ENCODE measurements at regions of chr16 and their contacts with region 1.

Region 1: DNA sequence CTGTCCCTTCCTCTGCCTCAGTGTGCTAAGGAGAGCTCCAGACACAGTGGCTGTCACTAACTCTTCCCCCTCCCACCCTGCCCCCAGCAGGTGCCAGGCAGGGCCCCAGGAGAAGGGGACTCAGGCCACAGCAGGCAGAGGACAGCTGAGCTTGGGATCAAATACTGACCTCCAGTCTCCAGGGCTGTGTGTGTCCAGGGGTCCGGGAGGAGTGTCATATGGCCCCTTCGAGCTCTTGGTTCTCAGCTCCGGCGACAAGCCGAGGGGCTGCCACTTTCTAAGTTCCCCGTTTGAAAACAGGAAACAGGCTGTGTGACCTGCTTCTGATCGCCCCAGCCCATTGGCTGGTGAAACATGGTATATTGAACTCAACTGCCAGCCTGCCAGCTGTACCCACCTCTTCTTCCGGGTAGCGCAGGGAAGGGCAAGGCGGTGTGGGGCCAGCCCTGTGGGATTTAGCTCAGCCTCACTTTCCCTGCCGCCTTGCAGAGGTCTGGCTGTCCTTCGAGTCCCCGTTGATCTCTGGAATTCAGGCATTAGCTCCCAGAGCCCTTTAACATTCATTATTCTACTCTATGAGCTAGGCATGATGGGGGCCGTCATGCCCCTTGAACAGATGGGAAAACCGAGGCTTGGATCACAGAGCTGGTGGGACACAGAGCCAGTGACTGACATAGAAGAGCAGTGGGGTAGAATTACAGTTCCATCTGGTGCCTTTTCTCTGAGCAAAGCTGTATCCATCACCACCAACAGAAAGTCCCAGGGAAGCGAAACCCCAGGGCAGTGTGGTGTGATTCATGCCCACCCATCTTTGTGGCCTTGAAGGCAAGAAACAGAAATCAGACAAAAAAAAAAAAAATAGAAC is at the start of gene SNX20:
- DNase-seq: peak in 8 of 9 donors; percentile 40 to 80 (median 75)
- ATAC-seq: peak; percentile 77
- H3K4me3 ChIP-seq: peak within 1 kb of the TSS; percentile 85
- H3K4me3 Mint-ChIP-seq: peak within 1 kb of the TSS; percentile 83 to 98 (median 93)
- H3K27ac ChIP-seq: peak within 1 kb of the TSS; percentile 90
- H3K27ac Mint-ChIP-seq: peak within 1 kb of the TSS; percentile 89 to 99 (median 97)
- H3K4me1 ChIP-seq: peaks cover 80 to 81% of the 10 kb centered on the region in 2 donors
- H3K4me1 Mint-ChIP-seq: peaks cover 68 to 94% (median 89%) of the 10 kb centered on the region in 7 donors
- H3K27me3 ChIP-seq: no peaks in the 10 kb centered on the region
- H3K27me3 Mint-ChIP-seq: no peaks in the 10 kb centered on the region
- total RNA-seq, gene SNX20: 32.4 to 94.9 (median 70.8) TPM

Region 2: DNA sequence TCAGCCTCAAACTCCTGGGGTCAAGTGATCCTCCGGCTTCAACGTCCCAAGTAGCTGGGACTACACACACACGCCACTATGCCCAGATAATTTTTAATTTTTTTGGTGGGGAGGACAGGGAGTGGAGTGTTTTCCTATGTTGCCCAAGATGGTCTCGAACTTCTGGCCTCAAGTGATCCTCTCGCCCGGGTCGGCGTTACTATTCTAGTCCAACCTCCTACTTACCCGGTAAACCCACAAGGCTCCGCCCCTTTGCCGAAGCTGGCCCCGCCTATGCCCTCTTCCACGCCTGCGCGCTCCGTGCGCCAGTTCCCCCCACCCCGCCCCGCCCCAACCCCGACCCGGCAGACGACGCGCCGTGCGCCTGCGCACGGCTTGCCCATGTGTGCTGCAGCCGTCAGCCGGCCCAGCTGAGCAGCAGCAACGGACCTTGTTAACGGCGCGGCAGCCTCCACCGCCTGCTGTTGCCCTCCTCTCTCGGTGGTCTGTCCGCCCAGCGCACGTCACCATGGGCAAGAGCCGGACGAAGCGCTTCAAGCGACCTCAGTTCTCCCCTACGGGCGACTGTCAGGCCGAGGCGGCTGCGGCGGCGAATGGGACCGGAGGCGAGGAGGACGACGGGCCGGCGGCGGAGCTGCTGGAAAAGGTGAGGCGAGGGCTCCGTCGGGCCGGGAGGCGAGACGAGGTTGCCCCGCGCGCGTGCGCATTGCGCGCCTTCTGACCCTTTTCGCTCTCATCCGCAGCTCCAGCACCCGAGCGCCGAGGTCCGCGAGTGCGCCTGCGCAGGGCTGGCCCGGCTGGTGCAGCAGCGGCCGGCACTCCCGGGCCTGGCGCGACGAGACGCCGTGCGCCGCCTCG is 615.4 kb before region 1 on chr16 and contains the start of gene HEATR3:
- CTCF ChIA-PET with region 1: no interaction called
- POLR2A ChIA-PET with region 1: no interaction called
- intact Hi-C with region 1: loop called in 1 of 2 experiments (anchors 5 kb)
- DNase-seq: peak; percentile 86 to 96 (median 90)
- ATAC-seq: peak; percentile 93
- H3K4me3 ChIP-seq: peak within 1 kb of the TSS; percentile 91
- H3K4me3 Mint-ChIP-seq: peak within 1 kb of the TSS; percentile 80 to 97 (median 92)
- H3K27ac ChIP-seq: peak within 1 kb of the TSS; percentile 81
- H3K27ac Mint-ChIP-seq: peak within 1 kb of the TSS; percentile 55 to 96 (median 93)
- H3K4me1 ChIP-seq: peaks cover 17 to 18% of the 10 kb centered on the region in 2 donors
- H3K4me1 Mint-ChIP-seq: peaks cover 34 to 49% (median 44%) of the 10 kb centered on the region in 7 donors
- H3K27me3 ChIP-seq: no peaks in the 10 kb centered on the region
- H3K27me3 Mint-ChIP-seq: no peaks in the 10 kb centered on the region
- total RNA-seq, gene HEATR3: 12.5 to 27.5 (median 23.5) TPM

Region 3: DNA sequence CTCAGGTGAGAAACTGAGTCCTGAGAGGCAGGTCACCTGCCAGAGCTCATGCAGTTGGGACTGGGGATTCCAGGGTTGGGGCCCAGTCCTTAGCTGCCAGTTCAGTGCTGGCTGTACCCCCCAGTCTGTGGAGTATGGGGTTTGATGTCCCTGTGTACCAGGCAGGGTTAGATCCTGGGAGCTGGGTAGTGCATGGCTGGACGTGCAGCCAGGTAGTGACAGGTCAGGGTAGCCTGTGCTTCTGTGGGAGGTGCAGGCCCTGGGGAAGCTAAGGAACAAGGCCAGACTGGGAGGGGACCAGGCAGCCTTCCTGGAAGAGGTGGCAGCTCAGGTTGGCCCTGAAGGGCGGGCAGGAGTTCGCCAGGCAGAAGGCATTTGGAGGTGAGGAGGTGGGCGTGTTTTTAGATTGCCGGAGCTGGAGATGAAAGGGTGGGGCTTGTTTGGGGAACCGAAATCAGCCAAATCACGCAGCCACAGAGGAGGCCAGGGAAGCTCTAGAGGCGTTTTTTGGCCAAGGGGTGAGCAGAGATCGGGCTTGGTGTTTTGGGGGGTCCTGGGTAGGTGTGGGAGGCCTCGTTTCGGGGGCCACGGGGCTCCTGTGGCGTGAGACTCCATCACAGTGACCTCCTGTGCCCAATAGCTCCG is 407.4 kb before region 1 on chr16:
- CTCF ChIA-PET with region 1: no interaction called
- POLR2A ChIA-PET with region 1: interaction called, 5 read pairs
- intact Hi-C with region 1: loop called in 1 of 2 experiments (anchors 5 kb)
- DNase-seq: peak in 5 of 9 donors; percentile 26 to 52 (median 40)
- ATAC-seq: peak; percentile 65
- H3K4me3 ChIP-seq: peak overlapping the region; percentile 67
- H3K4me3 Mint-ChIP-seq: peak overlapping the region; percentile 83 to 98 (median 92)
- H3K27ac ChIP-seq: peak overlapping the region; percentile 88
- H3K27ac Mint-ChIP-seq: peak overlapping the region; percentile 95 to 99 (median 99)
- H3K4me1 ChIP-seq: peaks cover 93% of the 10 kb centered on the region in 2 donors
- H3K4me1 Mint-ChIP-seq: peaks cover 72 to 99% (median 93%) of the 10 kb centered on the region in 7 donors
- H3K27me3 ChIP-seq: no peaks in the 10 kb centered on the region
- H3K27me3 Mint-ChIP-seq: no peaks in the 10 kb centered on the region

Region 4: DNA sequence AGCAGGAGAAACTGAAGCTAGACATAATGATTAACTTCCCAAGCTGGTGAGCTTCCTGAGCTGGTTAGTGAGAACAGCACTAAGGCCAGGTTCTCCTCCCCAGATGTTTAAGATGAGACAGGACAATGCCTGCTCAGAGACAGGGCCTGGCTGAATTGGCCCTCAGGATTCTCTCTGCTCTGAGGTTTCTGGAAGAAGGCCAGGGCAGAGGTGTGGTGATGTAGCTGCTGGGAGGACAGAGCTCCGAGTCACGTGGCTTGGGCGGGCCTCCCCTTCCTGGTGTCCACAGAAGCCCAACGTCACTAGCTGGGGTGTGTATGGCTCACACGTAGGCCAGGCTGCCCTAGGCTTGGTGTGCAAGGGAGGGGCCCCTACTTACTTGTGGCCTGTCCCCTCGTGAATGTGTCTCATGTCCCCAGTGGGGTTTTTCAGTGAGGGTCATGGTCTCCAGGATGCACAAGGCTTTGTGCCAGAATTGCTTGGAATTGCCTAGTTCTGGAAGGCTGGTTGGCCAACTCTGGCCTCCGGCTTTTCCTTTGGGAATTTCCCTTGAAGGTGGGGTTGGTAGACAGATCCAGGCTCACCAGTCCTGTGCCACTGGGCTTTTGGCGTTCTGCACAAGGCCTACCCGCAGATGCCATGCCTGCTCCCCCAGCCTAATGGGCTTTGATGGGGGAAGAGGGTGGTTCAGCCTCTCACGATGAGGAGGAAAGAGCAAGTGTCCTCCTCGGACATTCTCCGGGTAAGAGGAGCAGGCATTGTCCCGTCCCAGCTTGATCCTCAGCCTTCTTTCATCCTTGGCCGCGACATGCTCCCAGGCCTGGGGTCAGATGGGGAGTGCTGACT is 15.5 kb after region 1 on chr16:
- CTCF ChIA-PET with region 1: interaction called, 6 read pairs
- POLR2A ChIA-PET with region 1: interaction called, 16 read pairs
- intact Hi-C with region 1: loop called (anchors 1 kb)
- DNase-seq: no peak
- ATAC-seq: peak; percentile 82
- H3K4me3 ChIP-seq: peak overlapping the region; percentile 56
- H3K4me3 Mint-ChIP-seq: peak overlapping the region in 8 of 10 donors; percentile 22 to 83 (median 56)
- H3K27ac ChIP-seq: no peak overlapping the region
- H3K27ac Mint-ChIP-seq: peak overlapping the region in 7 of 9 donors; percentile 31 to 87 (median 43)
- H3K4me1 ChIP-seq: peaks cover 31 to 50% of the 10 kb centered on the region in 2 donors
- H3K4me1 Mint-ChIP-seq: peaks cover 51 to 74% (median 65%) of the 10 kb centered on the region in 7 donors
- H3K27me3 ChIP-seq: no peaks in the 10 kb centered on the region
- H3K27me3 Mint-ChIP-seq: peaks cover 0 to 8% (median 0%) of the 10 kb centered on the region in 5 donors

Region 5: DNA sequence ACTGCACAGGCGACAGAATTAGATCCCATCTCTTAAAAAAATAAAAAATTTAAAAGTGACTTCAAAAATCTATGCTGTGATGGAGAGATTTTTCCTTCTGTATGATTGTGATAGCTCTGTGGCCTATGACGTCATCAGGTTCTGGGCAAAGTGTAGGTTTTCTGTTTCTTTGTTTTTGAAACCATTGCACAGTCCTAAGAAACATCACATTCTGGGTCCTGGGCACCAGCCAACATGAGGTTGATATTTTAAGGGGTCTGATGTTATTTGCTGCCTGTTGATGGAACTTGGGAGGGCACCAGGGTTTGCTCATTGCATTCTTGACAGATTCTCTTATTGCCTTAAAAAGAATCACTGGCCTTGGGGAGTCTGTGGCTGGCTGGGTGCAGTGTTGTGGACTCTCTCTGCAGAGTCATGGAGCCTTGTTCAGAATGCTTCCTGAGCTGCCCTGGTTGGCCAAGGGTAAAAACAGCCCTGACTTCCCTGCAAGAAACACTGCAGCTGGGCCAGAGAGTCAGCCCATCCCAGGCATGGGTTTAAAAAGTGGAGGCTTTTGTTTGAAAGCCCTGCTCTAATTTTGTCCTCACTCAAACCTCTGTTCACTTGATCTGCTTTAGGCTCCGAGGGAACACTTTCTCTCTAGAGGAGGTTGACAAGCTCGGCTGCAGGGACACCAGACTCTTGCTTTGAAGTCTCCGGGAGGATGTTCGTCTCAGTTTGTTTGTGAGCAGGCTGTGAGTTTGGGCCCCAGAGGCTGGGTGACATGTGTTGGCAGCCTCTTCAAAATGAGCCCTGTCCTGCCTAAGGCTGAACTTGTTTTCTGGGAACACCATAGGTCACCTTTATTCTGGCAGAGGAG is 50.1 kb after region 1 on chr16:
- CTCF ChIA-PET with region 1: interaction called, 4 read pairs
- POLR2A ChIA-PET with region 1: interaction called, 20 read pairs
- intact Hi-C with region 1: no loop called
- DNase-seq: peak in 8 of 9 donors; percentile 22 to 48 (median 39)
- ATAC-seq: peak; percentile 58
- H3K4me3 ChIP-seq: no peak overlapping the region
- H3K4me3 Mint-ChIP-seq: peak overlapping the region; percentile 10 to 73 (median 51)
- H3K27ac ChIP-seq: peak overlapping the region; percentile 27
- H3K27ac Mint-ChIP-seq: peak overlapping the region; percentile 61 to 92 (median 84)
- H3K4me1 ChIP-seq: peaks cover 0 to 4% of the 10 kb centered on the region in 2 donors
- H3K4me1 Mint-ChIP-seq: peaks cover 16 to 37% (median 23%) of the 10 kb centered on the region in 7 donors
- H3K27me3 ChIP-seq: no peaks in the 10 kb centered on the region
- H3K27me3 Mint-ChIP-seq: no peaks in the 10 kb centered on the region

Measured in naive thymus-derived CD4-positive, alpha-beta T cell (primary cell).